MCF 10A (cell line): ENCODE measurements at regions of chr16 and their contacts with region 1.

Region 1: DNA sequence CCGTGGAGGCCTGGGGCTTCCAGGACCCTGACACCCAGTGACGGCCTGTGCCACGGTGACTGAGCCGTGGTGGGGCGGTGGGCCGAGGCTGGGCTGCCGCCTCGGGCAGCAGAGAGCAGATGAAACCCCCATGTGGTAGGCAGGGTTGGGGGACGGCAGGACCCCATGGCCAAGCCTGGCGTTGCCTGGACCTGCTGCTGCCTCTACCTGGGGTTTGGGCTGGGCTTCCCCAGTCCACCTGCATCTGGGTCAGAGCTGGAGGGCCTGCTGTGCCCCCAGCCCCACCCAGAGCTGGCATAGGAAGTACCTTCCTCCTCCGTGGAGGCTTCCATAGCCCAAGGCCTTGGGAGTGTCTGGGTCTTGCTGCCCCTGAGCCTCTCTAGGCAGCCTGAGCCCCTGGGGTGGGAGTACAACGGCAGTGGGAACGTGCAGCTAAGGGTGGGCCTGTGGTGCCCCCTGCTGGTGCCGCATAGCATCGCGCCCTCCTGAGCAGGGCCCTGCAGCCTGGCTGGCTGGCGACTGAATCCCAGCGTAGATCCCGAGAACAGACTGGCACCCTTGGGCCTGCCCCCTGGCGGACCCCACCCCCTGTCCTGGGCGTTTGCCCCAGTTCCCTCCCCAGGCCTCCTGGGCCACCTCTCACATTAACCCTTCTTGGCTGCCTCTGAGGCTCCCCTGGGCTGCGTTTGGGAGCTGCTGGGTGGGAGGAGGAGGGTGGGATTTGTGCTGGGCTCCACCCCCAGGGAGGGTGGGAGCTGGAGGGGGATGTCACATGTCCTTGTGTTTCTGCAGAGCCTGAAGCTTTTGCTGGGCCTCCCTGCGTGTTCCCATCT is 12.6 kb upstream of the ATP6V0C start:
- DNase-seq: peak; percentile 62
- H3K4me3 Mint-ChIP-seq: no peak overlapping the region
- H3K27ac Mint-ChIP-seq: no peak overlapping the region
- H3K4me1 Mint-ChIP-seq: peaks cover 5% of the 10 kb centered on the region
- H3K27me3 Mint-ChIP-seq: no peaks in the 10 kb centered on the region
- CTCF ChIP-seq: peak; percentile 99

Region 2: DNA sequence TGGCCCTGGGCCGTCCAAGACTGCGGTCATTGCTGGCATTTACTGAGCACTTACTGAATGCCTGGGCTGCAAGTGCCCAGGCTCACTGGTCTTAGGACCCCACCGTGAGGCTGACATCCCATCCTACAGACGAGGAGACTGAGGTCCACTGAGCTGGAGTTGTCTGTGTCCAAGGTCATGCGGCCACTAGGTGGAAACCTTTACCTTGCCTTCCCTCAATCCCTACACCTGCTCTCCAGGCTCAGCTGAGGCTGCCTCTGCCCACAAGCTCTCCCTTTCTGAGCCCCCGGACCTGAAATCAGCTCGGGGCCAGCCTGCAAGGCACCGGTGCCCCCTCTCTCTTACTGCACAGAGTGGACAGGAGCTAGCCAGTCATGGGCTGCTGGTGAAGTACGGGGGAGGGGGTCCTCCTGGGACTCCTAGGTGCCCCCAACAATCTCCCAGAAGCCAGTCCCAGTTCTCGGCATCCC is 306.2 kb before region 1 on chr16:
- CTCF ChIA-PET with region 1: interaction called, 4 read pairs
- POLR2A ChIA-PET with region 1: interaction called, 3 read pairs
- intact Hi-C with region 1: loop called (anchors 2 kb)
- DNase-seq: peak; percentile 70
- H3K4me3 Mint-ChIP-seq: no peak overlapping the region
- H3K27ac Mint-ChIP-seq: no peak overlapping the region
- H3K4me1 Mint-ChIP-seq: no peaks in the 10 kb centered on the region
- H3K27me3 Mint-ChIP-seq: no peaks in the 10 kb centered on the region
- CTCF ChIP-seq: peak; percentile 68

Region 3: DNA sequence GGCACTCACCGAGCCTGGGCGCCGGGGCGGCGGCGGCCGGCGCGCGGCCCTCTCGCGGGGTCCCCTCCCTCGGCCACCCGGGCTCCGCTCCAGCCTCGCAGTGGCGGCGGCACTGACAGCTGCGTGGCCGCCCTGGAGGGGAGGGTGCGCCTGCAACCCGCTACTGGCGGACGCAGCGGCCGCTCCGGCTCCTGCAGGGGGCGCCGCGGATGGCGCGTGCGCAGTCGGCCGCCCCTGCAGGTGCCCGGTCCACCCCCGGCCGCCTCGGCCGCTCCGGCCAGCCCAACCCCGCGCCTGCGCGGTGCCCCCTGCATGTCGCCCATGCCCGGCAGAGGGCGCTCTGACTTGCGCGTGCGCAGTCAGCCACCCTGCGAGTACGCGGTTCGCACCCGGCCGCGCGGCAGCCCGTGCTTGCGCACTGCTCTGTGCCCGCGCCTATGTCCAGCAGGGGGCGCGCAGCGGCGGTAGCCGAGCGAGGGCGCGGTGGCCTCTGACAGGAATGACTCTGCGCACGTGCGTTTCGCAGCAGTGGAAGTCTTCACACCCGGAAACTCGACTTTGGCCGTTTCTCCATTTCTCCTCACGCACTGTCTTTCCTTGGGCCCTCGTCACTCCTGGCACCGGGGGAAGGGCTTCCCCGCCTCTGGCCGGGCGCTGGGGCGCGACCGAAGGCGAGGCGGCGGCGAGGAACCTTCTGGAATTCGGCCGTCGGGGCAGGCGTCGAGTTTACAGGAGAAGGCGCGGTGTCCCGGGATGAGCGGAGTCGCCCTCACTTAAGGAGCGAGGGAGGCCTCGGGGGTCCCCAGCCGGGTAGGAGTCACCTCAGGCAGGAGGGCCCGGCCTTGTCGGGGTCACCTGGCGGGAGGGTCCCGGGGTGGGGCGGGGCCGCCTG is 160.3 kb before region 1 on chr16 and contains the start of gene ABCA3:
- CTCF ChIA-PET with region 1: interaction called, 4 read pairs
- POLR2A ChIA-PET with region 1: no interaction called
- intact Hi-C with region 1: loop called (anchors 1 kb)
- DNase-seq: peak; percentile 89
- H3K4me3 Mint-ChIP-seq: peak within 1 kb of the TSS; percentile 64
- H3K27ac Mint-ChIP-seq: no peak within 1 kb of the TSS
- H3K4me1 Mint-ChIP-seq: no peaks in the 10 kb centered on the region
- H3K27me3 Mint-ChIP-seq: no peaks in the 10 kb centered on the region
- CTCF ChIP-seq: peak; percentile 99
- total RNA-seq, gene ABCA3: 3.5 and 4.6 TPM in 2 replicates

Region 4: GRCh38 chr16:2429034-2429770 is 71.9 kb before region 1 on chr16 and contains the start of gene CCNF:
- CTCF ChIA-PET with region 1: interaction called, 15 read pairs
- POLR2A ChIA-PET with region 1: interaction called, 4 read pairs
- intact Hi-C with region 1: no loop called
- DNase-seq: peak; percentile 94
- H3K4me3 Mint-ChIP-seq: peak within 1 kb of the TSS; percentile 86
- H3K27ac Mint-ChIP-seq: peak within 1 kb of the TSS; percentile 16
- H3K4me1 Mint-ChIP-seq: peaks cover 20% of the 10 kb centered on the region
- H3K27me3 Mint-ChIP-seq: no peaks in the 10 kb centered on the region
- CTCF ChIP-seq: no peak
- total RNA-seq, gene CCNF: 7.5 and 11.9 TPM in 2 replicates

Region 5: GRCh38 chr16:2482707-2483534 is 18.2 kb before region 1 on chr16:
- CTCF ChIA-PET with region 1: interaction called, 11 read pairs
- POLR2A ChIA-PET with region 1: no interaction called
- intact Hi-C with region 1: no loop called
- DNase-seq: no peak
- H3K4me3 Mint-ChIP-seq: no peak overlapping the region
- H3K27ac Mint-ChIP-seq: no peak overlapping the region
- H3K4me1 Mint-ChIP-seq: peaks cover 10% of the 10 kb centered on the region
- H3K27me3 Mint-ChIP-seq: no peaks in the 10 kb centered on the region
- CTCF ChIP-seq: no peak

Region 6: GRCh38 chr16:2490190-2491105 is 10.7 kb before region 1 on chr16:
- CTCF ChIA-PET with region 1: interaction called, 10 read pairs
- POLR2A ChIA-PET with region 1: interaction called, 3 read pairs
- intact Hi-C with region 1: no loop called
- DNase-seq: no peak
- H3K4me3 Mint-ChIP-seq: no peak overlapping the region
- H3K27ac Mint-ChIP-seq: no peak overlapping the region
- H3K4me1 Mint-ChIP-seq: peaks cover 4% of the 10 kb centered on the region
- H3K27me3 Mint-ChIP-seq: no peaks in the 10 kb centered on the region
- CTCF ChIP-seq: no peak